ENCODE measurements at regions of chr9 and their contacts with region 1.

Region 1: DNA sequence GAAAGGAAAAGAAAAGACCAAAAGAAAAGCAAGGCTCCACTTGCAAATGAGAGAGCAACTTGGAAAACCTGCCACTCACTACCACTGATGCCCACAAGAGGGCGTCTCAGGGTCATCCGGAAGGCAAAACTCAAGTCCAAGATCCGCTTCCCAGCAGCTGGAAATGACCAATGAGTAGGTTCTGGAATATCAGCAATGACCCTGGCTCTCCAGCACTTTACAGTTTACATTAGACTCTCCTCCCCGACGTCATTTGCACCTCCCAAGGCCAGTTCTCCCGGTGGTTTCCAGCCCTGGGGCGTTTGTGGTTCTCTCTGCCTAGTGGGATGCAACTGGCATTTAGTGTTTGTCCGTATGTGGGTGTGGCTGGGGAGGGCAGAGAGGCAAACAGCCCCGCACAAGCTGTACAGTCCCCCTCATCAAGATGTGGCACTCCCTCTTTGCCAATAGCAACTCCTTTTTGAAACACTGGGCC is 193.8 kb upstream of the ZNF618 start:
- DNase-seq: peak; percentile 75 to 82
- H3K4me3 ChIP-seq: no peak overlapping the region
- H3K4me3 Mint-ChIP-seq: no peak overlapping the region
- H3K27ac Mint-ChIP-seq: no peak overlapping the region
- H3K4me1 ChIP-seq: no peaks in the 10 kb centered on the region
- H3K4me1 Mint-ChIP-seq: no peaks in the 10 kb centered on the region
- H3K27me3 ChIP-seq: no peaks in the 10 kb centered on the region; the same call in 1 of the 2 replicates
- H3K27me3 Mint-ChIP-seq: peaks cover 29% of the 10 kb centered on the region
- CTCF ChIP-seq: peak; percentile 82 to 88

Region 2: GRCh38 chr9:113876151-113876992 is 194.0 kb after region 1 on chr9 and contains the start of gene ZNF618:
- CTCF ChIA-PET with region 1: no interaction called
- POLR2A ChIA-PET with region 1: no interaction called
- intact Hi-C with region 1: loop called (anchors 10 kb)
- DNase-seq: peak in 1 of 2 experiments; percentile 43
- H3K4me3 ChIP-seq: peak within 1 kb of the TSS; percentile 76
- H3K4me3 Mint-ChIP-seq: peak within 1 kb of the TSS; percentile 94
- H3K27ac Mint-ChIP-seq: peak within 1 kb of the TSS; percentile 94
- H3K4me1 ChIP-seq: no peaks in the 10 kb centered on the region; the same call in 1 of the 2 replicates
- H3K4me1 Mint-ChIP-seq: peaks cover 7% of the 10 kb centered on the region
- H3K27me3 ChIP-seq: no peaks in the 10 kb centered on the region
- H3K27me3 Mint-ChIP-seq: peaks cover 19% of the 10 kb centered on the region
- CTCF ChIP-seq: peak in 1 of 2 experiments; percentile 44
- total RNA-seq, gene ZNF618: 1.2 and 1.5 TPM in 2 replicates

Region 3: GRCh38 chr9:114163517-114163951 is 481.2 kb after region 1 on chr9:
- CTCF ChIA-PET with region 1: no interaction called
- POLR2A ChIA-PET with region 1: no interaction called
- intact Hi-C with region 1: no loop called
- DNase-seq: peak in 1 of 2 experiments; percentile 22
- H3K4me3 ChIP-seq: no peak overlapping the region
- H3K4me3 Mint-ChIP-seq: no peak overlapping the region
- H3K27ac Mint-ChIP-seq: no peak overlapping the region
- H3K4me1 ChIP-seq: peaks cover 9% of the 10 kb centered on the region
- H3K4me1 Mint-ChIP-seq: no peaks in the 10 kb centered on the region
- H3K27me3 ChIP-seq: no peaks in the 10 kb centered on the region
- H3K27me3 Mint-ChIP-seq: no peaks in the 10 kb centered on the region
- CTCF ChIP-seq: no peak